Right cardiac atrium (tissue), 5 donors: ENCODE measurements at regions of chr17 and their contacts with region 1.

Region 1: GRCh38 chr17:76314392-76315227 is 6.5 kb upstream of the QRICH2 start:
- DNase-seq: no peak
- ATAC-seq: peak in 1 of 2 donors; percentile 56
- H3K4me3 ChIP-seq: no peak overlapping the region
- H3K27ac ChIP-seq: peak overlapping the region; percentile 14
- H3K4me1 ChIP-seq: no peaks in the 10 kb centered on the region
- H3K27me3 ChIP-seq: no peaks in the 10 kb centered on the region

Region 2: GRCh38 chr17:76397687-76398487 is 83.3 kb after region 1 on chr17:
- intact Hi-C with region 1: loop called in 3 of 4 experiments (anchors 5 kb)
- DNase-seq: peak; percentile 89 to 97 (median 95)
- ATAC-seq: peak; percentile 76 to 77
- H3K4me3 ChIP-seq: no peak overlapping the region
- H3K27ac ChIP-seq: no peak overlapping the region
- H3K4me1 ChIP-seq: no peaks in the 10 kb centered on the region
- H3K27me3 ChIP-seq: no peaks in the 10 kb centered on the region